Naive thymus-derived CD4-positive, alpha-beta T cell (primary cell): ENCODE measurements at regions of chr1 and their contacts with region 1.

Region 1: DNA sequence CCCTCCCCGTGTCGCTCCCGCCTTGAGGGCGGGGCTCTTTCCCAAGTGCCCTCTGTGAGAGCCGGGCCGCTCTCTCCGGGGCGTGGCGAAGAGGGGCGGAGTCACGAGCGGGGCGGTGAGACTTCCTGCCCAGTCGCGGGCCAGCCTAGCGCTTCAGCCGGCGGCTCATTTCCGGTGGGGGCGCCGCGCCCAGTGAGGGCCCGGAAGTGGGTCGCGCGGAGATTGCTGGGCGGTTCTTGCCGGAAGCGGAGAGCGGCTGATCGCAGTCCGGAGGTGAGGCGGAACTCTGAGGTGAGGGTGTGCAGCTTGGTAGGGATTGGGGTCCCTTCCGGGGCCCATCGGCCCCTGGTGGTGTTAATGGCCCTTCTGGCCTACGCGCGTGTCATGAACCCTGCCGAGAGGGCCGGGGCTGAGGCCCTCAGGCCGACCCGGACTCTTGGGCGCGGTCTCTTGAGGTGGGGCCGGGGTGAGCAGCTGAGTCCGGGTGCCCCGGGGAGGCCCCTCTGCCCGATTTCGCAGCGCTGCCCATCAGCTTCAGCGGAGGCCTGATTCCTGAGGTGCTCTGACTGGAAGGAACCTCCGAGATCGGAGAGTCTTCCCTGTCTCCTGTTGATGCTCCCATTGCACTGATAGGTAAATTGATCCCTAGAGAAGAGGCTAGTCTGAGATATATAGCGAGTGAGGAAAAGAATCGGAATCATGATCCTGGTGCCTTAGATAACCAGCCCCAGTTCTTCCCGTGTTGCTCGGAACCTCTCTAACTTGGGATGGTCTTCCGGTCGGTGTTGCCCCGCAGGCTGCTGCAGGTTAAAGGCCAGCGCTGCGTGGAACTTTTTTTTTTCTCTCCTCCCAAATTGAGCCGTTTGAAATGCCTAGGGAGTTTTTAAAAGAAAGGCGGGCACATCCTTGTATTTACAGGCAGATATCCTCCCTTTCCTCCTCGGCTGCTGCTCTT is at the start of gene CAP1:
- DNase-seq: peak; percentile 99 to 100 (median 100)
- ATAC-seq: peak; percentile 97
- H3K4me3 ChIP-seq: peak within 1 kb of the TSS; percentile 99
- H3K4me3 Mint-ChIP-seq: peak within 1 kb of the TSS; percentile 90 to 99 (median 98)
- H3K27ac ChIP-seq: peak within 1 kb of the TSS; percentile 91
- H3K27ac Mint-ChIP-seq: peak within 1 kb of the TSS; percentile 85 to 99 (median 97)
- H3K4me1 ChIP-seq: peaks cover 49 to 51% of the 10 kb centered on the region in 2 donors
- H3K4me1 Mint-ChIP-seq: peaks cover 54 to 82% (median 72%) of the 10 kb centered on the region in 7 donors
- H3K27me3 ChIP-seq: no peaks in the 10 kb centered on the region
- H3K27me3 Mint-ChIP-seq: no peaks in the 10 kb centered on the region
- total RNA-seq, gene CAP1: 176 to 683 (median 282) TPM

Region 2: GRCh38 chr1:39293375-39294070 is 747.3 kb before region 1 on chr1:
- CTCF ChIA-PET with region 1: no interaction called
- POLR2A ChIA-PET with region 1: no interaction called
- intact Hi-C with region 1: no loop called
- DNase-seq: no peak
- ATAC-seq: no peak
- H3K4me3 ChIP-seq: no peak overlapping the region
- H3K4me3 Mint-ChIP-seq: no peak overlapping the region
- H3K27ac ChIP-seq: no peak overlapping the region
- H3K27ac Mint-ChIP-seq: peak overlapping the region in 5 of 9 donors; percentile 18 to 56 (median 34)
- H3K4me1 ChIP-seq: no peaks in the 10 kb centered on the region
- H3K4me1 Mint-ChIP-seq: peaks cover 0 to 11% (median 0%) of the 10 kb centered on the region in 7 donors
- H3K27me3 ChIP-seq: no peaks in the 10 kb centered on the region
- H3K27me3 Mint-ChIP-seq: no peaks in the 10 kb centered on the region

Region 3: GRCh38 chr1:39683591-39684312 is 357.0 kb before region 1 on chr1:
- CTCF ChIA-PET with region 1: no interaction called
- POLR2A ChIA-PET with region 1: no interaction called
- intact Hi-C with region 1: loop called in 1 of 2 experiments (anchors 1 kb)
- DNase-seq: peak in 6 of 9 donors; percentile 39 to 73 (median 57)
- ATAC-seq: peak; percentile 75
- H3K4me3 ChIP-seq: peak overlapping the region; percentile 37
- H3K4me3 Mint-ChIP-seq: peak overlapping the region in 8 of 10 donors; percentile 23 to 70 (median 58)
- H3K27ac ChIP-seq: peak overlapping the region; percentile 60
- H3K27ac Mint-ChIP-seq: peak overlapping the region in 6 of 9 donors; percentile 16 to 75 (median 36)
- H3K4me1 ChIP-seq: peaks cover 0 to 36% of the 10 kb centered on the region in 2 donors
- H3K4me1 Mint-ChIP-seq: peaks cover 14 to 55% (median 35%) of the 10 kb centered on the region in 7 donors
- H3K27me3 ChIP-seq: no peaks in the 10 kb centered on the region
- H3K27me3 Mint-ChIP-seq: peaks cover 0 to 46% (median 26%) of the 10 kb centered on the region in 5 donors

Region 4: GRCh38 chr1:39886757-39887231 is 154.0 kb before region 1 on chr1:
- CTCF ChIA-PET with region 1: no interaction called
- POLR2A ChIA-PET with region 1: no interaction called
- intact Hi-C with region 1: loop called in 1 of 2 experiments (anchors 1 kb)
- DNase-seq: no peak
- ATAC-seq: no peak
- H3K4me3 ChIP-seq: no peak overlapping the region
- H3K4me3 Mint-ChIP-seq: no peak overlapping the region
- H3K27ac ChIP-seq: no peak overlapping the region
- H3K27ac Mint-ChIP-seq: no peak overlapping the region
- H3K4me1 ChIP-seq: peaks cover 9 to 11% of the 10 kb centered on the region in 2 donors
- H3K4me1 Mint-ChIP-seq: peaks cover 11 to 22% (median 15%) of the 10 kb centered on the region in 7 donors
- H3K27me3 ChIP-seq: no peaks in the 10 kb centered on the region
- H3K27me3 Mint-ChIP-seq: peaks cover under 1 to 12% (median 6%) of the 10 kb centered on the region in 5 donors

Region 5: GRCh38 chr1:40096977-40097782 is 56.4 kb after region 1 on chr1 and contains the start of gene PPT1:
- CTCF ChIA-PET with region 1: no interaction called
- POLR2A ChIA-PET with region 1: interaction called, 3 read pairs
- intact Hi-C with region 1: loop called in 1 of 2 experiments (anchors 1 kb)
- DNase-seq: peak; percentile 52 to 83 (median 77)
- ATAC-seq: peak; percentile 92
- H3K4me3 ChIP-seq: peak within 1 kb of the TSS; percentile 93
- H3K4me3 Mint-ChIP-seq: peak within 1 kb of the TSS; percentile 86 to 97 (median 94)
- H3K27ac ChIP-seq: peak within 1 kb of the TSS; percentile 71
- H3K27ac Mint-ChIP-seq: peak within 1 kb of the TSS; percentile 90 to 97 (median 94)
- H3K4me1 ChIP-seq: peaks cover 13 to 14% of the 10 kb centered on the region in 2 donors
- H3K4me1 Mint-ChIP-seq: peaks cover 26 to 47% (median 34%) of the 10 kb centered on the region in 7 donors
- H3K27me3 ChIP-seq: no peaks in the 10 kb centered on the region
- H3K27me3 Mint-ChIP-seq: peaks cover 0 to 18% (median 3%) of the 10 kb centered on the region in 5 donors
- total RNA-seq, gene PPT1: 51.8 to 114 (median 62.6) TPM

Region 6: GRCh38 chr1:40315239-40315794 is 274.5 kb after region 1 on chr1:
- CTCF ChIA-PET with region 1: no interaction called
- POLR2A ChIA-PET with region 1: interaction called, 3 read pairs
- intact Hi-C with region 1: loop called in 1 of 2 experiments (anchors 2 kb)
- DNase-seq: peak; percentile 70 to 90 (median 86)
- ATAC-seq: peak; percentile 94
- H3K4me3 ChIP-seq: peak overlapping the region; percentile 73
- H3K4me3 Mint-ChIP-seq: peak overlapping the region; percentile 84 to 95 (median 88)
- H3K27ac ChIP-seq: peak overlapping the region; percentile 46
- H3K27ac Mint-ChIP-seq: peak overlapping the region; percentile 43 to 84 (median 76)
- H3K4me1 ChIP-seq: peaks cover 8% of the 10 kb centered on the region in 2 donors
- H3K4me1 Mint-ChIP-seq: peaks cover 11 to 66% (median 34%) of the 10 kb centered on the region in 7 donors
- H3K27me3 ChIP-seq: no peaks in the 10 kb centered on the region
- H3K27me3 Mint-ChIP-seq: peaks cover 7 to 36% (median 13%) of the 10 kb centered on the region in 5 donors

Region 7: GRCh38 chr1:40385437-40386358 is 344.9 kb after region 1 on chr1:
- CTCF ChIA-PET with region 1: no interaction called
- POLR2A ChIA-PET with region 1: interaction called, 7 read pairs
- intact Hi-C with region 1: loop called in 1 of 2 experiments (anchors 5 kb)
- DNase-seq: peak in 8 of 9 donors; percentile 55 to 97 (median 94)
- ATAC-seq: peak; percentile 86
- H3K4me3 ChIP-seq: peak overlapping the region; percentile 48
- H3K4me3 Mint-ChIP-seq: peak overlapping the region; percentile 79 to 99 (median 87)
- H3K27ac ChIP-seq: peak overlapping the region; percentile 99
- H3K27ac Mint-ChIP-seq: peak overlapping the region; percentile 97 to 99 (median 98)
- H3K4me1 ChIP-seq: peaks cover 82 to 84% of the 10 kb centered on the region in 2 donors
- H3K4me1 Mint-ChIP-seq: peaks cover 71 to 94% (median 90%) of the 10 kb centered on the region in 7 donors
- H3K27me3 ChIP-seq: no peaks in the 10 kb centered on the region
- H3K27me3 Mint-ChIP-seq: no peaks in the 10 kb centered on the region